Aorta (tissue), 5 donors: ENCODE measurements at regions of chr5 and their contacts with region 1.

Region 1: GRCh38 chr5:160119142-160119904 is at the start of gene PWWP2A:
- DNase-seq: peak; percentile 99
- ATAC-seq: peak; percentile 99
- H3K4me3 ChIP-seq: peak within 1 kb of the TSS; percentile 70 to 77
- H3K27ac ChIP-seq: peak within 1 kb of the TSS; percentile 51 to 85
- H3K4me1 ChIP-seq: no peaks in the 10 kb centered on the region
- H3K27me3 ChIP-seq: no peaks in the 10 kb centered on the region
- total RNA-seq, gene PWWP2A: 25.9 to 29.4 TPM

Region 2: DNA sequence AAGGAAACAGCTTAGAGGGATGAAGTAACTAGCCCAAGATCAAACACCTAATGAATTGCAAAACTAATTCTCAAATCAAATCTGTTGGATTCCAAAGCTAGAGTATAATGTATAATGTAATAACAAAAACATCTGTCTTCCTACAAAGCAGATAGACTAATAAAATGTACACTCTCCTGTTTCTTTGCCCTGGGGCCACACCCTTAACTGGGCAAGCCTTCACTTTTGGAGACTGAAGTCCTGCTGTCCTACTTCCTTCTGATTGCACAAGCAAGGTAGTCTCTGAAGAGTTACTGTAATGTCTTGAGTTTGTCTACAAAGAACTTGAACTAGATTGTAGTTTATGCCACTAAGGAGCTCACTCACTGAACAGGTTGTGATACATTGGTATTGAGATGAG is 107.9 kb before region 1 on chr5:
- intact Hi-C with region 1: loop called in 1 of 2 experiments (anchors 10 kb)
- DNase-seq: no peak
- ATAC-seq: no peak
- H3K4me3 ChIP-seq: no peak overlapping the region
- H3K27ac ChIP-seq: no peak overlapping the region
- H3K4me1 ChIP-seq: no peaks in the 10 kb centered on the region
- H3K27me3 ChIP-seq: no peaks in the 10 kb centered on the region

Region 3: GRCh38 chr5:160064995-160065630 is 54.2 kb before region 1 on chr5:
- intact Hi-C with region 1: no loop called
- DNase-seq: no peak
- ATAC-seq: no peak
- H3K4me3 ChIP-seq: no peak overlapping the region
- H3K27ac ChIP-seq: no peak overlapping the region
- H3K4me1 ChIP-seq: peaks cover 0 to 1% of the 10 kb centered on the region in 2 donors
- H3K27me3 ChIP-seq: no peaks in the 10 kb centered on the region

Region 4: DNA sequence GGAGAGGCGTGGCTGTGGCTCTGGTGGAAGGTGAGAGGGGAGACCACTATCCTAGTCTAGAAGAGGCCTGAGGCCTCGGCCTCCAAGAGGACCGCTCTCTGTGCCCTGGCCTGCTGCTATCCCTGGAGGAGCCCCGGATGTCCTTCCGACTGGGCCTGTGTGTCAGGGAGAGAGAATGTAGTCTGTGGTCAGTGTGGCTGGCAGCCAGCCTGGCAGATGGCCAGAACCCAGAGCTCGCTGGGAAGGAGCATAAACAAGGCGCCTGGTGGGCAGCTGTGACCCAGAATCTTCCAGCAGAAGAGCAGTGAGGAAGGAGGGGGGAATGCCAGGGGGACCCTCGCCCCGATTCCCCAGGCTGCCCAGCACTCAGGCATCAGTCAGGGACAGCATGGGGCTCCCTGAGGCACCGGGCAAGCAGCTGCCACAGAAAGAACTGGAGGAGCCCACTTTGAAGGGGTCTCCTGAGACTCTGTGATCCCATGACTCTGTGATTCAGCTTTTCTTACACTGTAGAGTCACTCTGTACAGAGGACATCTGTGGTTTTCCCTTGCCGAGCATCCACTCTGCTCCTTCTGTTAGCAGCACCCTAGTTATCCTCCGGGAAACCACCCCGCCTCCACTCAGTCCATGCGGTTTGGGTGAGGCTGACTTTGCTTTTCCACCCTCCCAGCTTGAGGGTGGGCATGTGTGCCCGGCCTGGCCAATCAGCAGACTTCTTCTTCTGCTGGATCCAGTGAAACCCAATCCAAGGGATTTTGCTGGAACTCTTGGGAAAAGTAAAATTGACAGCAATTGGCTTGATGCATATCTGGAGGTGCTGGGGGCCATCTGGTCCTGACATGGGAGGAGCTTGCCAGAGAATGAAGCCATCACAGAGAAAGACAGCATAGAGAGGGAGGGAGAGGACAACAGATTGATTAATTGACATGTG is 46.1 kb after region 1 on chr5:
- intact Hi-C with region 1: loop called (anchors 1 kb)
- DNase-seq: peak; percentile 96 to 98
- ATAC-seq: peak; percentile 91
- H3K4me3 ChIP-seq: no peak overlapping the region
- H3K27ac ChIP-seq: peak overlapping the region; percentile 71 to 91
- H3K4me1 ChIP-seq: no peaks in the 10 kb centered on the region
- H3K27me3 ChIP-seq: no peaks in the 10 kb centered on the region

Region 5: GRCh38 chr5:160293901-160294561 is 174.7 kb after region 1 on chr5:
- intact Hi-C with region 1: no loop called
- DNase-seq: no peak
- ATAC-seq: peak; percentile 45
- H3K4me3 ChIP-seq: no peak overlapping the region
- H3K27ac ChIP-seq: no peak overlapping the region
- H3K4me1 ChIP-seq: no peaks in the 10 kb centered on the region
- H3K27me3 ChIP-seq: no peaks in the 10 kb centered on the region

Region 6: GRCh38 chr5:160357861-160358411 is 238.6 kb after region 1 on chr5:
- intact Hi-C with region 1: loop called in 1 of 2 experiments (anchors 10 kb)
- DNase-seq: peak in 1 of 2 donors; percentile 71
- ATAC-seq: peak; percentile 83
- H3K4me3 ChIP-seq: no peak overlapping the region
- H3K27ac ChIP-seq: peak overlapping the region; percentile 23 to 98
- H3K4me1 ChIP-seq: peaks cover 1 to 10% of the 10 kb centered on the region in 2 donors
- H3K27me3 ChIP-seq: no peaks in the 10 kb centered on the region